A549 (cell line): ENCODE measurements at regions of chr6 and their contacts with region 1.

Region 1: GRCh38 chr6:2911171-2911570 is 8.1 kb upstream of the SERPINB9 start:
- DNase-seq: no peak
- ATAC-seq: no peak
- H3K4me3 ChIP-seq: no peak overlapping the region
- H3K27ac ChIP-seq: peak overlapping the region in 1 of 2 experiments; percentile 32; a peak in 1 of 6 replicates
- H3K4me1 ChIP-seq: peaks cover 6% of the 10 kb centered on the region; the same call in 1 of the 3 replicates
- CTCF ChIP-seq: no peak
- EP300 ChIP-seq: no peak
- POLR2A ChIP-seq: no peak
- RAD21 ChIP-seq: no peak

Region 2: GRCh38 chr6:2841264-2842138 is 69.7 kb before region 1 on chr6 and contains the start of gene SERPINB1:
- CTCF ChIA-PET with region 1: interaction called, 29 read pairs
- POLR2A ChIA-PET with region 1: interaction called, 5 read pairs
- DNase-seq: peak; percentile 47 to 90
- ATAC-seq: peak; percentile 74 to 81
- H3K4me3 ChIP-seq: peak within 1 kb of the TSS; percentile 71
- H3K27ac ChIP-seq: peak within 1 kb of the TSS; percentile 94 to 99
- H3K4me1 ChIP-seq: peaks cover 41% of the 10 kb centered on the region
- CTCF ChIP-seq: no peak
- EP300 ChIP-seq: no peak
- POLR2A ChIP-seq: peak; percentile 75
- RAD21 ChIP-seq: 0 out of 5 replicates have a peak, but pooled peaks of 1 of the 2 experiments have one; percentile 9
- polyA plus RNA-seq, gene SERPINB1: 98.6 and 135 TPM in 2 replicates

Region 3: GRCh38 chr6:2846873-2847224 is 64.3 kb before region 1 on chr6:
- CTCF ChIA-PET with region 1: interaction called, 29 read pairs
- POLR2A ChIA-PET with region 1: interaction called, 5 read pairs
- DNase-seq: no peak
- ATAC-seq: 0 out of 6 replicates have a peak, but pooled peaks of 1 of the 2 experiments have one; percentile 21
- H3K4me3 ChIP-seq: peak overlapping the region; percentile 13; the same call in 1 of the 3 replicates
- H3K27ac ChIP-seq: peak overlapping the region; percentile 81 to 94
- H3K4me1 ChIP-seq: peaks cover 39% of the 10 kb centered on the region
- CTCF ChIP-seq: no peak
- EP300 ChIP-seq: no peak
- POLR2A ChIP-seq: no peak
- RAD21 ChIP-seq: no peak

Region 4: DNA sequence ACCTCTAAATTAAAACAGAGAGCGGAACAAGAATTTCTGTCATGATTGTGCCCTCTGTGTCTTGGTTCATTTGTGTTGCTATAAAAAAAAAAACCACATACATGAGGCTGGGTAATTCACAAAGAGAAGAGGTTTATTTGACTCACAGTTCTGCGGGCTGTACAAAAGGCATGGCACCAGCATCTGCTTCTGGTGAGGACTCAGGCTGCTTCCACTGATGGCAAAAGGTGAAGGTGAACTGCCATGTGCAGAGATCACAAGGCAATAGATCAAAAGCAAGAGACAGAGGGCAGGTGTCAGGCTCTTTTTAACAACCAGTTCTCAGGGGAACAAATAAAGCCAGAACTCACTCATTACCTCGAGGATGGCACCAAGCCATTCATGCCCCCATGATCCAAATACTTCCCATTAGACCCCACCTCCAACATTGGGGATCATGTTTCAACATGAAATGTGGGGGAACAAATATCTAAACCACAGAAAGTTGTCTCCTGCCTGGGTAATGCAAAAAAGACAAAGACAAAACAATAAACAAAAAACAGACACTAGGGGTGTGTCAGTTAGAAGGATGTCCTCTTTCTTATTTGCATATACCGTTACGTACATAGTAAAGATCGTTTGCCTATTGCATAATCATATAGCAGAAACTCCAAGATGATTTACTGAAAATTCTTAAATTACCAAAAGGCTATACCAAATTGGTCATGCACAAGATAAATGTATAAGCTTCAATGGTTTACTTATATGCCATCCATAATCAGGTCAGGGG is 25.0 kb before region 1 on chr6:
- CTCF ChIA-PET with region 1: no interaction called
- POLR2A ChIA-PET with region 1: no interaction called
- DNase-seq: no peak
- ATAC-seq: no peak
- H3K4me3 ChIP-seq: no peak overlapping the region
- H3K27ac ChIP-seq: no peak overlapping the region
- H3K4me1 ChIP-seq: no peaks in the 10 kb centered on the region; the same call in 2 of the 3 replicates
- CTCF ChIP-seq: no peak
- EP300 ChIP-seq: no peak
- POLR2A ChIP-seq: no peak
- RAD21 ChIP-seq: no peak

Region 5: GRCh38 chr6:2900821-2901644 is 10.1 kb before region 1 on chr6:
- CTCF ChIA-PET with region 1: interaction called, 19 read pairs
- POLR2A ChIA-PET with region 1: no interaction called
- DNase-seq: no peak
- ATAC-seq: no peak
- H3K4me3 ChIP-seq: no peak overlapping the region
- H3K27ac ChIP-seq: peak overlapping the region in 1 of 2 experiments; percentile 89; a peak in 3 of 6 replicates
- H3K4me1 ChIP-seq: peaks cover 18% of the 10 kb centered on the region
- CTCF ChIP-seq: no peak
- EP300 ChIP-seq: no peak
- POLR2A ChIP-seq: no peak
- RAD21 ChIP-seq: no peak

Region 6: GRCh38 chr6:3023663-3024483 is 112.7 kb after region 1 on chr6:
- CTCF ChIA-PET with region 1: no interaction called
- POLR2A ChIA-PET with region 1: no interaction called
- DNase-seq: peak; percentile 80 to 89
- ATAC-seq: peak; percentile 96 to 98
- H3K4me3 ChIP-seq: peak overlapping the region; percentile 53
- H3K27ac ChIP-seq: peak overlapping the region; percentile 94 to 98
- H3K4me1 ChIP-seq: peaks cover 18% of the 10 kb centered on the region
- CTCF ChIP-seq: no peak
- EP300 ChIP-seq: no peak
- POLR2A ChIP-seq: peak; percentile 31
- RAD21 ChIP-seq: no peak